PC-3 (cell line): ENCODE measurements at regions of chr3 and their contacts with region 1.

Region 1: DNA sequence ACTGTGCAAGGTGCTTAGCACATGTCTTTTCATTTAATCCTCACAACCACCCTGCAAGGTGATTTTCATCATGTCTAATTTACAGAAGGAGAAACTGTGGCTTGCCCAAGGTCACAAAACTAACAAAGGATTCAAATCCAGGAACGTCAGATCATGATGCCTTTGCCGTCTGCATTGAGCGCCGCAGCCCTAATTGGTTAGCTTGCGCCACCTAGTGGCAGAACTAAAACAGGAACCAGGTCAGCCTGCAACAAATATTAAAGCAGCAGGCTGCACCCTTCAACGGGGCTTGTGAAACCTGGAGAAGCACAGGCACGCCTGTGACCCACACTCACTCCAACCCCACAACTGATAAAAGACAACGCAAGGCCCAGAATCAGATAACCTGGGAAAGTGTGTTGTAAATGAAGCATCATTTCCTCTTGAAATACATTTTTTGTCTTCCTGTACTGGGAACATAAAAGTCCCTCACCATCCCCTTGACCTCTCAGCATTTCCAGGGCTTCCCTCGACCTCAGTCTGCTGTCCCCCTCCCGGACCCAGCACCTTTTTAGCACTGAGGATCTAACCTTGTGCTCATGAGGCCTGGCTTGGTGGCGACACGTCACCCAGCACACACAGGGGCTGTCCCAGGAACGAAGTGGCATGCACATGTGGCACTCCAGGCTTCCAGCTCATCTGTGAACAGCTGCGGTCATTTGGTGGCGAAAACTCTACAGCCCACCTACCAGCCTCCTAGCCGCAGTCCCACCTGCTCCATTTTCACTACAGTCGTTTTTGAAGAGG is 17.3 kb downstream of the DPH3 start:
- DNase-seq: peak; percentile 93
- ATAC-seq: peak; percentile 87
- H3K4me3 ChIP-seq: peak overlapping the region; percentile 33; the same call in 1 of the 2 replicates
- H3K27ac ChIP-seq: no peak overlapping the region
- H3K4me1 ChIP-seq: peaks cover 25% of the 10 kb centered on the region
- H3K27me3 ChIP-seq: no peaks in the 10 kb centered on the region
- CTCF ChIP-seq: peak; percentile 98

Region 2: GRCh38 chr3:15825016-15825415 is 422.5 kb before region 1 on chr3:
- CTCF ChIA-PET with region 1: no interaction called
- POLR2A ChIA-PET with region 1: no interaction called
- intact Hi-C with region 1: no loop called
- DNase-seq: no peak
- ATAC-seq: no peak
- H3K4me3 ChIP-seq: no peak overlapping the region
- H3K27ac ChIP-seq: no peak overlapping the region
- H3K4me1 ChIP-seq: no peaks in the 10 kb centered on the region
- H3K27me3 ChIP-seq: no peaks in the 10 kb centered on the region
- CTCF ChIP-seq: no peak

Region 3: GRCh38 chr3:16177962-16178627 is 69.4 kb before region 1 on chr3:
- CTCF ChIA-PET with region 1: interaction called, 6 read pairs
- POLR2A ChIA-PET with region 1: no interaction called
- intact Hi-C with region 1: loop called (anchors 2 kb)
- DNase-seq: peak; percentile 84
- ATAC-seq: peak; percentile 94
- H3K4me3 ChIP-seq: no peak overlapping the region
- H3K27ac ChIP-seq: no peak overlapping the region
- H3K4me1 ChIP-seq: peaks cover 12% of the 10 kb centered on the region; the same call in 1 of the 2 replicates
- H3K27me3 ChIP-seq: no peaks in the 10 kb centered on the region
- CTCF ChIP-seq: peak; percentile 96

Region 4: GRCh38 chr3:16205156-16205870 is 42.2 kb before region 1 on chr3:
- CTCF ChIA-PET with region 1: no interaction called
- POLR2A ChIA-PET with region 1: no interaction called
- intact Hi-C with region 1: loop called (anchors 2 kb)
- DNase-seq: peak; percentile 97
- ATAC-seq: peak; percentile 80
- H3K4me3 ChIP-seq: peak overlapping the region; percentile 1; the same call in 1 of the 2 replicates
- H3K27ac ChIP-seq: peak overlapping the region; percentile 94
- H3K4me1 ChIP-seq: peaks cover 48% of the 10 kb centered on the region
- H3K27me3 ChIP-seq: no peaks in the 10 kb centered on the region
- CTCF ChIP-seq: no peak

Region 5: DNA sequence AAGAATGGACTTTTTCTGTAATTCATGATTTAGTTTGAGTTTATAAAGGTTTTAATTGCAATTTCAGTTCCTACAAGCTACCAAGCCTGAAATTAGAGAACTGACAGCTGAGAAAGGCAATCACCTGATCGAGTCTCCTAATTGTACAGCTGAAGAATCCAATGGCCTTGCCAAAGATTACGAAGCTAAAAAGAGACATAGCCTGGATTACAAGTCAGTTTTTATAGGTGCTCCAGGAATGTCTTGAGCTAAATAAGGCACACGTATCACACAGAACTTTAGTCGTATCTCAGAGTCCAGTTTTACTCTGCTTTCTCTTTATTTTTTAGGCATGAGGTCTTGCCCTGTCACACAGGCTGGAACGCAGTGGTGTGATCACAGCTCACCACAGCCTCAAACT is 10.7 kb after region 1 on chr3:
- CTCF ChIA-PET with region 1: interaction called, 13 read pairs
- POLR2A ChIA-PET with region 1: no interaction called
- intact Hi-C with region 1: no loop called
- DNase-seq: no peak
- ATAC-seq: no peak
- H3K4me3 ChIP-seq: no peak overlapping the region
- H3K27ac ChIP-seq: no peak overlapping the region
- H3K4me1 ChIP-seq: peaks cover under 1% of the 10 kb centered on the region
- H3K27me3 ChIP-seq: no peaks in the 10 kb centered on the region
- CTCF ChIP-seq: no peak